HepG2 (cell line): ENCODE measurements at regions of chr9 and their contacts with region 1.

Region 1: GRCh38 chr9:127899128-127899946 is at the start of gene ST6GALNAC6:
- DNase-seq: no peak
- ATAC-seq: peak; percentile 14
- H3K4me3 ChIP-seq: peak within 1 kb of the TSS; percentile 89 to 95 (median 95)
- H3K27ac ChIP-seq: peak within 1 kb of the TSS; percentile 91
- H3K4me1 ChIP-seq: peaks cover 64% of the 10 kb centered on the region
- H3K27me3 ChIP-seq: no peaks in the 10 kb centered on the region
- CTCF ChIP-seq: no peak
- EP300 ChIP-seq: no peak
- POLR2A ChIP-seq: no peak
- RAD21 ChIP-seq: no peak
- total RNA-seq, gene ST6GALNAC6: 16.7 and 18.5 TPM in 2 replicates

Region 2: DNA sequence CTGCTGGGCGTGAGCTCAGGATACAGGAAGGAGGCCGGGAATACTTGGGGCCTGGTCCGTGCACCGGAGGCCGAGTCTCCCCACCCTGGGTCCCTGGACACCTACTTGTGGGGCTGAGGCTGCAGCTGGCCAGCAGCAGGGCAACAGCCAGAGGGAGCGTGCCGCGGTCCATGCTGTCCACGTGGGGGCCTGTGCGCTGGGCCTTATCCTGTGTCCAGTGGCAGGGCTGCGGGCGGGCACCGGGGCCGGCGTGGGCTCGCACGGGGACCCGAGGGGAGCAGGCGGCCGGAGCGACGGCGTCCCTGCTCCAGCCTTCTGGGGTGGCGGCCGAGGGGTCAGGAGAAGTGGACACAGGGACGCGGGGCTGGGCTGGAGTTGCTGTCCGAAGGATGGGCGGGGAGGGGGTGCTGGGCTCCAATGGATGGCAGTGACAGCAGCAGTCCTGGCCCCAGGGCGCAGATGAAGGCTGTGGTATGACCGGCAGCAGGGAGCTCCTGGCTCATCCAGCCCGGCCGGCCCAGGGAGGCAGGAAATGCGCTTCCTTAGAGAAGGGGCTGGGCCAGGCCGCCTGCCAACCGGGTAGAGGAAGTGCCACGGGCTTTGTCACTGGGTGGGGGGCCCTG is 45.0 kb before region 1 on chr9 and contains the start of gene ENG:
- CTCF ChIA-PET with region 1: no interaction called
- POLR2A ChIA-PET with region 1: no interaction called
- in situ Hi-C with region 1: no loop called
- intact Hi-C with region 1: no loop called
- DNase-seq: no peak
- ATAC-seq: peak; percentile 38
- H3K4me3 ChIP-seq: peak within 1 kb of the TSS in 2 of 3 experiments; percentile 8 to 9; a peak in 2 of 6 replicates
- H3K27ac ChIP-seq: no peak within 1 kb of the TSS
- H3K4me1 ChIP-seq: peaks cover 70% of the 10 kb centered on the region
- H3K27me3 ChIP-seq: 0 out of 5 replicates have a peak, but pooled peaks cover 0 to 1% of the 10 kb centered on the region in 2 experiments
- CTCF ChIP-seq: no peak
- EP300 ChIP-seq: no peak
- POLR2A ChIP-seq: no peak
- RAD21 ChIP-seq: no peak
- total RNA-seq, gene ENG: 0.02 TPM in 1 of 2 replicates, not detected in the other

Region 3: DNA sequence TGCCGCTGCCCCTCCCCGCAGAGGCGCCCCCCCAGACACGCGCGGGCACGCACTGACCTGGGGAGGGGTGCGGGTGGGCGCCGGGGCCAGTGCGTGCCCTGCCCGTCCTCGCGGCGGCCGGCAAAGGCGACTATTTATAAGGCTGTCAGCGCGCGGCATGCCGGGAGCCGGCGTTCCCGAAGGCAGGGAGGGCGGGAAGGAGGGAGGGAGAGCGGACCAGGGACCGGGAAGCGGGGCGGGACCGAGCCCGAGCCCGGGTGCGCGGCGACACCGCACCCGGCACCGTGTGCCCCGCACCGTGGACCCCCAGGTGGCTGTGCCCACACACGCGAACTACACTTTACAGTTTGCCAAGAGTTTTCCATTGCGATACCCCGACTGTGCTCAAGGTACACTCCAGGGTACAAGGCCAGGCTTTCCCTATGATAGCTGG is 21.8 kb before region 1 on chr9 and contains the start of gene AK1:
- CTCF ChIA-PET with region 1: no interaction called
- POLR2A ChIA-PET with region 1: interaction called, 11 read pairs
- in situ Hi-C with region 1: no loop called
- intact Hi-C with region 1: no loop called
- DNase-seq: no peak
- ATAC-seq: peak; percentile 81
- H3K4me3 ChIP-seq: peak within 1 kb of the TSS; percentile 67 to 82 (median 69)
- H3K27ac ChIP-seq: peak within 1 kb of the TSS; percentile 14
- H3K4me1 ChIP-seq: peaks cover 38% of the 10 kb centered on the region
- H3K27me3 ChIP-seq: no peaks in the 10 kb centered on the region
- CTCF ChIP-seq: no peak
- EP300 ChIP-seq: no peak
- POLR2A ChIP-seq: peak in 1 of 2 experiments; percentile 62; a peak in 2 of 4 replicates
- RAD21 ChIP-seq: no peak
- total RNA-seq, gene AK1: 25.7 and 32.8 TPM in 2 replicates

Region 4: GRCh38 chr9:127884427-127884911 is 14.9 kb before region 1 on chr9:
- CTCF ChIA-PET with region 1: no interaction called
- POLR2A ChIA-PET with region 1: interaction called, 12 read pairs
- in situ Hi-C with region 1: no loop called
- intact Hi-C with region 1: no loop called
- DNase-seq: no peak
- ATAC-seq: no peak; the same call in none of the 3 replicates
- H3K4me3 ChIP-seq: no peak overlapping the region
- H3K27ac ChIP-seq: no peak overlapping the region
- H3K4me1 ChIP-seq: peaks cover 4% of the 10 kb centered on the region; the same call in 1 of the 2 replicates
- H3K27me3 ChIP-seq: no peaks in the 10 kb centered on the region
- CTCF ChIP-seq: no peak
- EP300 ChIP-seq: no peak
- POLR2A ChIP-seq: no peak
- RAD21 ChIP-seq: no peak